ENCODE measurements at regions of chr5 and their contacts with region 1.

Region 1: GRCh38 chr5:32531885-32532520 is 53.4 kb upstream of the SUB1 start:
- DNase-seq: peak; percentile 78
- H3K4me3 Mint-ChIP-seq: peak overlapping the region; percentile 83
- H3K27ac Mint-ChIP-seq: peak overlapping the region; percentile 98
- H3K4me1 Mint-ChIP-seq: peaks cover 41% of the 10 kb centered on the region
- H3K27me3 Mint-ChIP-seq: no peaks in the 10 kb centered on the region

Region 2: DNA sequence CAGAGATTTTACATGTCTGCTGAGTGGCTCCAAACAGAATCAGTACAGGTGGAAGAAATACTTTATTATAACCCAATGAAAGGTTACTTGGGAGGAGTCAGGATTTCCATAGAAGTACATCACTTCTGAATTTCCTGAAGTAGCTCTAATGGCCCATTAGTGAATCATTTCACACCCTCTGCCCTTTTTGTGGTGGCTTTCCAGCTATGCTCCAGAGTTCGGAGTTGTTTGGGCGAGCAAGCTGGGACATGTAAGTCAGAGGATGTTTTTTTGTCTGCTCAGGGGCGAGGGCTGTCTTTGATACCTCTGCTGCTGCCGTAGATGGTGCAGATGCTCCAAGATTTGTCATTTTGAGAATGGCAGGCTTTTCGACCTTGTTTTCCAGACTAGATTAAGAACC is 584.0 kb before region 1 on chr5:
- CTCF ChIA-PET with region 1: no interaction called
- intact Hi-C with region 1: no loop called
- DNase-seq: no peak
- H3K4me3 Mint-ChIP-seq: no peak overlapping the region
- H3K27ac Mint-ChIP-seq: no peak overlapping the region
- H3K4me1 Mint-ChIP-seq: no peaks in the 10 kb centered on the region
- H3K27me3 Mint-ChIP-seq: peaks cover 3% of the 10 kb centered on the region

Region 3: GRCh38 chr5:32174011-32174870 is 357.8 kb before region 1 on chr5 and contains the start of gene GOLPH3:
- CTCF ChIA-PET with region 1: no interaction called
- intact Hi-C with region 1: loop called (anchors 2 kb)
- DNase-seq: peak; percentile 96
- H3K4me3 Mint-ChIP-seq: peak within 1 kb of the TSS; percentile 99
- H3K27ac Mint-ChIP-seq: peak within 1 kb of the TSS; percentile 95
- H3K4me1 Mint-ChIP-seq: peaks cover 32% of the 10 kb centered on the region
- H3K27me3 Mint-ChIP-seq: no peaks in the 10 kb centered on the region
- total RNA-seq, gene GOLPH3: 38.2 to 41.5 TPM

Region 4: DNA sequence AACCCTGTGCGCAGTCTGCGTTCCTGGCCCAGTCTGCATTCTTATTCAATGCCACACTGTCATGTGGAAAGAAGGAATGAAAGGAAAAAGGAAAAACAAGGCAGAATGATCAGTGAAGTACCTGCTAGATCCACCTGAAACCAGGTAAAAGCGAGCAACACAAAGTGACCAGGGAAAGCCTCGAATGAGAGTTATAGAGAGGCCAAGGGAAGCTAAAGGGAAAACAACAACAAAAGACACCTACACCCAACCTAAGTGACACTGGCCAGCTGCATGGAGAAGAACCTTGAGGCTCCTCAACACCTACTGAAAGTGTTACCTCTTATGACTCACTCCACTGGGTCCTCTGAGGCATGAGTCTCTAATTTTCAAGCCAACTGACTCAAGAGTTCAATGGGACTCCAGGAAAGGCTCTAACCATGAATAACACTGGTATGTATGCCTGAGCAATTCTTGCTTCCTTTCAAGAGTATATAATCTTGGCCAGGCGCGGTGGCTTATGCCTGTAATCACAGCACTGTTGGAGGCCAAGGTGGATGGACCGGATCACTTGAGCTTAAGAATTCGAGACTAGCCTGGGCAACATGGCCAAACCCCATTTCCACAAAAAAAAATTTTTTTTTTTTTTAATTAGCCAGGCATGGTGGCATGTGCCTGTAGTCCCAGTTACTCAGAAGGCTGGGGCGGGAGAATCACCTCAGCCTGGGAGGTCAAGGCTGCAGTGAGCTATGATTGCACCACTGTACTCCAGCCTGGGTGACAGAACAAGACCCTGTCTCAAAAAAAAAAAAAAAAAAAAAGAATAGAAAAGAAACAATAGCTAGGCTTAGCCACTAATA is 248.2 kb before region 1 on chr5:
- CTCF ChIA-PET with region 1: no interaction called
- intact Hi-C with region 1: loop called (anchors 5 kb)
- DNase-seq: peak; percentile 46
- H3K4me3 Mint-ChIP-seq: no peak overlapping the region
- H3K27ac Mint-ChIP-seq: peak overlapping the region; percentile 37
- H3K4me1 Mint-ChIP-seq: peaks cover 41% of the 10 kb centered on the region
- H3K27me3 Mint-ChIP-seq: no peaks in the 10 kb centered on the region

Region 5: DNA sequence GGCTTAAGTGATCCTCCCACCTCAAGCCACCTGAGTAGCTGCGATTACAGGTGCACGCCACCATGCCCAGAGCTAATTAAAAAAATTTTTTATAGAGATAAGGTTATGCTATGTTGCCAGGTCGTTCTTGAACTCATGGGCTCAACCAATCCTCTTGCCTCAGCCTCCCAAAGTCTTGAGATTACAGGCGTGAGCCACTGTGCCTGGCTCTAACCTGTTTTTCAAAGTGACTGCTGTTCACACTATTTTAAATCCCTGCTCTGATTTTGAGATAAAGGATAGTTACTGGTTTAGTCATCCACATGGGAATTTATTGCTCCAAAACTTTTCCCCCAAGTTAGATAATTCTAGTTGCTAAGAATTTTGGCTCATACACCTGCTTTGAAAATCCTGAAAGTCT is 171.1 kb before region 1 on chr5:
- CTCF ChIA-PET with region 1: no interaction called
- intact Hi-C with region 1: no loop called
- DNase-seq: no peak
- H3K4me3 Mint-ChIP-seq: no peak overlapping the region
- H3K27ac Mint-ChIP-seq: no peak overlapping the region
- H3K4me1 Mint-ChIP-seq: peaks cover 3% of the 10 kb centered on the region
- H3K27me3 Mint-ChIP-seq: no peaks in the 10 kb centered on the region

Region 6: DNA sequence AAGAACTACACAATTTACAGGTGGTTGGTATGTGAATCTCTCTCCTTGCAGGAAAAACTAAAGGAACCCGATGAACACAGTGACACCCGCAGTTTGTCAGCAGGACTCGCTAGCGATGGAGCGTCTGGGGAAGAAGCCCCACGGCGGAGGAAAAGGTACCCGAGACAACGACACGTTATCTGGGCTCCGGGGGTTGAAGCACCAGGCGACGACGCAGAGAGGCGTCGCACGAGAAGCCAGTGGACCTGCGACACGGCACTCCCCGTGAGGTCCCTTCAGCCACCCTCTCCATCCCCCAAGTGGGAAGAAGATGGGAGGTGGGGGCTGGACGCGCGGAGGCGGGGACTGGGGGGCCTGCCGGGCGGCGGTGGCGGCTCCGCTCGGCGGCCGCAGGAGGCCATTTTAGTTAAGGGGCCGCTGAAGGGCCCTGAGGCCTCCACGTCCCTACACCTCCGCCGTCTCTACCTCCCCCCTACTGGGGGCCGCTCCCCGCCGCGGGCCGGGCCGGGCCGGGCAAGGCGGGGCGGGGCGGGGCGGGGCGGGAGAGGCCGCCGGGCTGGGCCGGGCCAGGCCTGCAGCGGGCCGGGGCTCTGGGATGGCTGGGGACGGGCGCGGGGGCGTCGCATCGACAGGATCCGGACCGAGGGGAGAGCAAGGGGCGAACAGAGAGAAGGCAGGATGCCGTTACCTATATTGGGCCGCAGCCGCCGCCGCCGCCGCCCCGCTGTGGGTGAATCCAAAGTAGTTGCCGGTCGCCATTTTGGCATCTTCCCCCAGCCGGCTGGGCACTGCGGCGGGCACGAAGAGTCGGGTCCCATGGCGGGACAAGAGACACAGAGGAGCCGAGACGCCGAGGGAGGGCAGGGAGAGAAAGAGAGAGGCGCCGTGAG is 88.2 kb before region 1 on chr5:
- CTCF ChIA-PET with region 1: no interaction called
- intact Hi-C with region 1: loop called (anchors 1 kb)
- DNase-seq: peak; percentile 50
- H3K4me3 Mint-ChIP-seq: peak overlapping the region; percentile 93
- H3K27ac Mint-ChIP-seq: peak overlapping the region; percentile 96
- H3K4me1 Mint-ChIP-seq: peaks cover 35% of the 10 kb centered on the region
- H3K27me3 Mint-ChIP-seq: no peaks in the 10 kb centered on the region

Region 7: GRCh38 chr5:32489791-32490582 is 42.0 kb before region 1 on chr5:
- CTCF ChIA-PET with region 1: interaction called, 9 read pairs
- intact Hi-C with region 1: loop called (anchors 2 kb)
- DNase-seq: peak; percentile 83
- H3K4me3 Mint-ChIP-seq: no peak overlapping the region
- H3K27ac Mint-ChIP-seq: no peak overlapping the region
- H3K4me1 Mint-ChIP-seq: peaks cover 1% of the 10 kb centered on the region
- H3K27me3 Mint-ChIP-seq: no peaks in the 10 kb centered on the region

Region 8: GRCh38 chr5:32542216-32543059 is 10.4 kb after region 1 on chr5:
- CTCF ChIA-PET with region 1: interaction called, 4 read pairs
- intact Hi-C with region 1: loop called (anchors 1 kb)
- DNase-seq: peak; percentile 51
- H3K4me3 Mint-ChIP-seq: no peak overlapping the region
- H3K27ac Mint-ChIP-seq: peak overlapping the region; percentile 79
- H3K4me1 Mint-ChIP-seq: peaks cover 40% of the 10 kb centered on the region
- H3K27me3 Mint-ChIP-seq: no peaks in the 10 kb centered on the region